OCI-LY7 (cell line): ENCODE measurements at regions of chr10 and their contacts with region 1.

Region 1: DNA sequence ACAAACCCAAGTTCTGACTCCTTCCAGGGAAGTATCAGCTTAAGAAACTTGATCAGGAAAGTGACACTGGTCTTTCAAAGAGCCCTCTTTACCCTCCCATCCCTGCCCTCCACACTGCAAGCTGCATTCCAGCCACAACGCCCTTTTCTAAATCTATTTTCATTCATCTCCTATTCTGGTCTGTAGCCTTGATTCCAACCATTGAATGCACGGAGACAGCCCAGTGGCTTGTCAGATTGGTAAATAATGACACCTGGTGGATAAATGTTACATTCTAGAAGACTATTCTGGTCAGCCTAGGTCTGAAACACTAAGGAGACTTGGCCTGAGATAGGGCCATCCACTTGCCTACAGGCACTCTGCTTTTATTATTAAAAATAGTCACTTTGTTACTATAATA is 20.9 kb downstream of the MORN4 start:
- DNase-seq: peak; percentile 57
- H3K4me3 ChIP-seq: no peak overlapping the region
- H3K27ac ChIP-seq: no peak overlapping the region
- H3K4me1 ChIP-seq: no peaks in the 10 kb centered on the region
- CTCF ChIP-seq: peak; percentile 74

Region 2: DNA sequence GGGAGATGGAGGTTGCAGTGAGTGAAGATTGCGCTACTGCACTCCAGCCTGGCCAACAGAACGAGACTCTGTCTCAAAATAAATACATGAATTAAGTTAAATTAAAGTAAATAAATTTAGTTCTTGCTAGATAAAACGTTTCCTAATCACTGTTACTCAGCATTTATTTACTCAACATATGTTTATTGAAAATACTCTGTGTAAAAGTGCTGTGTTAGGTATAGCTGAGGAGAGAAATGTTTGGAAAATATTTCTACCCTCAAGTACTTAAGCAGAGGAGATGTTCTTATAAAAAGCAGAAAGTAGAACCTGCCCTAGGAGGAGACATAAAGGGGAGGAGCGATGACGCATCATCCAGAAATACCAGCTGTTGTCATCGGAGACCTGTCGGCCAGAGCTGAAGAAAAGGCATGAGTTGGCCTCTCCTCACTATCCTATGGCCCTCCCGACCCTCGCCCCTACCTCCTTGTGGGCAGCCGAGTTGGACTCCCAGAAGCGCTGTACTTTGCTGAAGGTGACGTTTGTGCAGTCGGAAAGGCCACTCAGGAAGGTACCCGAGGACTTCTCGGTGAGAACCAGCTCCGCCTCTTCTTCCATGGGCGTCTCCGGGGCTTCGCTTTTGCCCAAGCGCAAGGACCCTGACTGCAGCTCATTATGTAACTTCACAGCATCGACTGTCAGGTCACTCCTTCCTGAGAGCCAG is 212.4 kb before region 1 on chr10:
- CTCF ChIA-PET with region 1: no interaction called
- POLR2A ChIA-PET with region 1: no interaction called
- intact Hi-C with region 1: no loop called
- DNase-seq: peak; percentile 71
- H3K4me3 ChIP-seq: peak overlapping the region; percentile 84
- H3K27ac ChIP-seq: peak overlapping the region; percentile 50
- H3K4me1 ChIP-seq: peaks cover 5% of the 10 kb centered on the region
- CTCF ChIP-seq: no peak

Region 3: DNA sequence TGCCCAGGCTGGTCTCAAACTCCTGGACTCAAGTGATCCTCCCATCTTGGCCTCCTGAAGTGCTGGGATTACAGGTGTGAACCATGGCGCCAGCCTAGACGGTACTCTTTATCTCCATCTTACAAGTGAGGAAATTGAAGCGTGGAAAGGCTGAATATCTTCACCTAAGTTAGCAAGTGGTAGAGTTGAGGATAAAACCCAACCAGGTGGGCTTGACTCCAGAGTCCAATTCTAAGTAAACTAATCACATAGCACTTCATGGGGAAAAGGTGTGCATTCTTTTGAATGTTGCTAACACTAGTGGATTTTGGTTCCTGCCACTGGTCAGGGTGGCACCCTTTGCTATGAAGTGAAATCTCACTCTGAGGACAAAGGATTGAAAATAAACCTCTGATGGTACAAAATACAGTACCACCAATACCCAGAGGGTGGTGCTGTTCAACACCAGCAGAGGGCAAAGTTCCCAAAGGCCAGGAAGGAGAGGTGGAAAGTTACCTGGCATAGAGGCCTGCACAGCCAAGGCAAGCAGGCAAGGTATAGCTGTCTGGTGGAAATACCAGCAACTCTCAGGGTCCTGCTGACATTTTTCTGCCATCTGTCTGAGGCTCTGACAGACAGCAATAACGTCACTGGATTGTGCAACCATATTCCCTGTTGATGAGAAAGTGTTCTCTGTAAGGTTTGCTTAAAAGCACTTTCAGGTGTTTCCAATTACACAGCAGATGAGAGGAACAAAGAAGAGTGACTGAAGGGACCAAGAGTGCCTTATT is 148.8 kb before region 1 on chr10:
- CTCF ChIA-PET with region 1: no interaction called
- POLR2A ChIA-PET with region 1: interaction called, 3 read pairs
- intact Hi-C with region 1: loop called (anchors 1 kb)
- DNase-seq: peak; percentile 56
- H3K4me3 ChIP-seq: no peak overlapping the region
- H3K27ac ChIP-seq: no peak overlapping the region
- H3K4me1 ChIP-seq: peaks cover 10% of the 10 kb centered on the region
- CTCF ChIP-seq: peak; percentile 97

Region 4: GRCh38 chr10:97534746-97535367 is 77.5 kb before region 1 on chr10:
- CTCF ChIA-PET with region 1: no interaction called
- POLR2A ChIA-PET with region 1: no interaction called
- intact Hi-C with region 1: loop called (anchors 2 kb)
- DNase-seq: peak; percentile 40
- H3K4me3 ChIP-seq: no peak overlapping the region
- H3K27ac ChIP-seq: no peak overlapping the region
- H3K4me1 ChIP-seq: no peaks in the 10 kb centered on the region
- CTCF ChIP-seq: peak; percentile 80

Region 5: DNA sequence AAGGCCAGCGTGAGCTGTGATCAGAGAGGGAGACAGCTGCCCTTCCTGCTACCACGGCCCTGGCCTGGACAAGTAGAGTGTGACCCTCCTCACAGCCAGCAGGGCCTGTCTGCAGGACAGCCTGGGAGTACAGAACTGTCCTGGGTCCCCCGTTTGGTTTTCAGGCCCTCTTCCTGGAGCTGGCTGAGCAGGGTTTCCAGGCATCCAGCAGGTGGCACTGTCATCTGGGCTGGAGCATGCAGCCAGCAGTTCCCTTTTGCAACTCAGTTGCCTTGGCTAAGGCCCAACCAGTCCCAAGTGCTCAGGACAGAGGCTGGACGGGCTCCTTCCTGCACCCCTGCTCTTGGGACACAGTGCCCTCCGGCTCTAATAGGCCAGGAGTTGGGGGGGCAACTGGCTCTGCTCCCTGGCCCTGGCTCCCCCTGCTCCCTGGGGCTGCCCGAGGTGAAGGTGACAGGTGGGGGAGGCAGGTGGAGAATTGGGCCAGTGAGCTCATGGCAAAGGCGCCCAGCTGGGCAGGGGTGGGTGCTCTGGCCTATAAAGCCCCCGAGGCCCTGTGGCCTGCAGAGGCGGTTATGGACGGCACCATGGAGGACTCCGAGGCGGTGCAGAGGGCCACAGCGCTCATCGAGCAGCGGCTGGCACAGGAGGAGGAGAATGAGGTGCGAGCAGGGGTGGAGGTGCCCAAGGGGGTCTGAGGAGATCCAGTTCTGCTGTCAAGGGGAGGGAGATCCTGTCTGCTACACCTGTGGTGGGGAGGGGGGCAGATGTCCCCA is 40.0 kb before region 1 on chr10 and contains the start of gene ANKRD2:
- CTCF ChIA-PET with region 1: interaction called, 5 read pairs
- POLR2A ChIA-PET with region 1: interaction called, 3 read pairs
- intact Hi-C with region 1: loop called (anchors 1 kb)
- DNase-seq: peak; percentile 74
- H3K4me3 ChIP-seq: no peak within 1 kb of the TSS
- H3K27ac ChIP-seq: no peak within 1 kb of the TSS
- H3K4me1 ChIP-seq: no peaks in the 10 kb centered on the region
- CTCF ChIP-seq: peak; percentile 92
- total RNA-seq, gene ANKRD2: not detected in 2 replicates

Region 6: GRCh38 chr10:97659589-97659988 is 47.2 kb after region 1 on chr10:
- CTCF ChIA-PET with region 1: no interaction called
- POLR2A ChIA-PET with region 1: no interaction called
- intact Hi-C with region 1: no loop called
- DNase-seq: no peak
- H3K4me3 ChIP-seq: no peak overlapping the region
- H3K27ac ChIP-seq: no peak overlapping the region
- H3K4me1 ChIP-seq: no peaks in the 10 kb centered on the region
- CTCF ChIP-seq: no peak